Motor neuron (in vitro differentiated cells): ENCODE measurements at regions of chr12 and their contacts with region 1.

Region 1: DNA sequence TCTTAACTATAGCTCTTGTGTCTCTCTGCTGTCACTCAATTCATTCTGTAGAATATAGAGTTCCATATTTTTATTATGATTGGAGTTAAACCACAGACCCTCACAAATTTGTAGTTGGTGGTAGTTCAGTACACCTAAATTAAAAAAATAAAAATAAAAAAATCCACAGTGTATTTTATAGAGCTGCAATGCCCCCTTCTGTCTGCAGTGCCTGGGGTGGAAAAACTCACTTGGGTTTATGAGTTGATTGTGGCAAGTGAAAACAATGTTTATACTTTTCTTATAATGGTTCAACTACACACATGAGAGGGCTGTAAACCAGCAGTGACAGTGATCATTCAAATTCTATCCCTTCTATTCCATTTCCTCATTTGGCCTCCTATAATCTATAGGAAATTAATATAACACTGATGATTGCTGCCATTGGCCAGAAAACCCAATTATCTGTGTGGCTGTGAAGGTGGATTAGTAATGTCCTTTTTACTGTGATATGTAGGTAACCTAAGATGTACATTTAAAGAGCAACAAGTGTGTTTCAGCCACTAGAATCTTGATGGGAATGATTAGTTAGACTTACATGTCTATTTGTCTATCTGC is 166.9 kb upstream of the LRIG3 start:
- ATAC-seq: peak in 3 of 8 experiments; percentile 33 to 35 (median 33)
- H3K4me3 ChIP-seq: no peak overlapping the region
- H3K27ac ChIP-seq: no peak overlapping the region
- H3K4me1 ChIP-seq: peaks cover 0 to 13% of the 10 kb centered on the region in 2 donors

Region 2: DNA sequence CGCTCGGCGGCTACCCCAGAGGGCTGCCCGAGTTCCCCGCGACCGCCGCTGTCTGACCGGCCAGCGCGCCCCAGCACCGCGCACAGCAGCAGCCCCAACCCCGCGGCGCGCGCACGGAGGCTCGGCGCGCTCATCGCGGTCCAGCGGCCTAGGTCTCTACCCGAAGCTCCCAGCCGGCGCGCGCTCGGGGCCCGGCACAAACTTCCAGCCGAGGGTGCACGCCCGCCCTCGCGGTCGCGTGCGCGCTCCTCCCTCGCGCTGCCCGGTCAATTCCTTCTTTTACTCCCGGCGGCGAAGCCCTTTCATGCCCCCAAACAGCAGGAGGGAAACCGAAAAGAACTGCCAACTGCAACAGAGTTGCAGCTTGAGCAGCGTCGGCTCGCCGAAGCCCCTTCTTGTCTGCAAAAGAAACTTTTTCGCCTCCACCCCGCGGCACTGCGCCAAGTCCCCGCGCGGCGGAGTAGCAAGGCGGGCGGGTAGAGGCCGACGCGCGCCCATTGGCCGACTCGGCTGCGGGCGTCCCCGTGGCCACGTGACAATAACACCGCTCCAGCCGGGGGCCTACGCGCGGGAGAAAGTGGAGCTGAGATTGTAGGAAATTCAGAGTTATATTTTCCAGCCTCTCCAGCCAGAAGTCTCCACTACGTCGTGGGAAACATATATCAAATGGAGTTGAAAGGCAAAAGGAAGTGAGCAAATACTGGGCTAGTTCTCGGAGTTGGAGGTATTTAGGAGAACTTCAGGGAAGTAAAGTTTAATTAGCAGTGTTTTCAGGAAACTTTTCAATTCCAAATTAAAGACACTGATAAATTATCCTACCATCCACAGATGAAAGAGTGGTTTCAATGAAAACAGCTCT is 166.8 kb before region 1 on chr12 and contains the start of gene LRIG3:
- in situ Hi-C with region 1: loop called in 3 of 9 experiments (anchors 10 to 25 kb)
- ATAC-seq: peak; percentile 80 to 97 (median 95)
- H3K4me3 ChIP-seq: peak within 1 kb of the TSS; percentile 41 to 73 (median 61)
- H3K27ac ChIP-seq: peak within 1 kb of the TSS in 1 of 2 donors; percentile 1
- H3K4me1 ChIP-seq: peaks cover 4 to 15% of the 10 kb centered on the region in 2 donors
- total RNA-seq, gene LRIG3: 3.2 to 150 (median 14.8) TPM

Region 3: DNA sequence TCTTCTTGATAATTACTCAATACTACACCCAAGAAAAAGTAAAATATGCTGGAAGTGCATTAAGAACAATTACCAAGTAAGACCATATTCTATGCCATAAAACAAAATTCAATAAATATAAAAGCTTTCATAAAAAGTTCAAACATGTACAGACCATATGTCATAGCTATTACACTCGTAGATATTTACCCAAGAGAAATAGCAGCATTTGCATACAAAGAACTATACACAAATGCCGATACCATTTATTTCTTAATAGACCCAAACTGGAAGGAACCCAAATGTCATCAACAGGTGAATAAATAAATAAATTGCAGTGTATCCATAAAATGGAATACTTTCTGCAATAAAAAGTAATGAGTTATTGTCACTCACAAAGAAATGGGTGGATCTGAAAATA is 430.3 kb after region 1 on chr12:
- in situ Hi-C with region 1: no loop called
- ATAC-seq: no peak
- H3K4me3 ChIP-seq: no peak overlapping the region
- H3K27ac ChIP-seq: no peak overlapping the region
- H3K4me1 ChIP-seq: peaks cover 0 to 2% of the 10 kb centered on the region in 2 donors